ENCODE measurements at regions of chr11 and their contacts with region 1.

Region 1: GRCh38 chr11:124800226-124800929 is at the start of gene MSANTD2:
- DNase-seq: peak; percentile 53 to 71
- H3K4me3 ChIP-seq: peak within 1 kb of the TSS; percentile 97
- H3K27ac ChIP-seq: peak within 1 kb of the TSS; percentile 56
- H3K4me1 ChIP-seq: peaks cover 29% of the 10 kb centered on the region
- H3K27me3 ChIP-seq: no peaks in the 10 kb centered on the region
- CTCF ChIP-seq: no peak
- total RNA-seq, gene MSANTD2: 16.9 and 18.1 TPM in 2 replicates

Region 2: DNA sequence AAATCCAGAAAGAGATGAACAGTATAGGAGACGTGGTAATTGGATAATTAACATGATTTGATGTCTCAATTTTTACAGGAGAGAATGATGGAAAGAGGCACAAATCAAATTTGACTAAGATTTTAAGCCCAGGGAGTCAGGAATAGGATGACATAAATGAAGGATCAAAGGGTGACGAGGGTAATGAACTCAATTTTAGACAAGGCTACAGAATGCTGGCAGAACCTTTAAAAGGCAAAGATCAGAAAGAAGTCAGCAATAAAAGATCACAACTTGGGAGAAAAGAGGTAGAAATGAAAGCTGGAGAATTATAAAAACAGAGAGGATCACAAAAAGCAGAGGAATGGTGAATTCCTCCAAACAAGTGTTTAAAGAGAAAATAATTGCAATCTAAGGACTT is 243.6 kb before region 1 on chr11:
- CTCF ChIA-PET with region 1: no interaction called
- POLR2A ChIA-PET with region 1: no interaction called
- intact Hi-C with region 1: no loop called
- DNase-seq: no peak
- H3K4me3 ChIP-seq: no peak overlapping the region
- H3K27ac ChIP-seq: no peak overlapping the region
- H3K4me1 ChIP-seq: no peaks in the 10 kb centered on the region
- H3K27me3 ChIP-seq: peaks cover 15% of the 10 kb centered on the region; the same call in 1 of the 2 replicates
- CTCF ChIP-seq: no peak

Region 3: GRCh38 chr11:124739479-124740276 is 60.7 kb before region 1 on chr11 and contains the start of gene NRGN:
- CTCF ChIA-PET with region 1: no interaction called
- POLR2A ChIA-PET with region 1: no interaction called
- intact Hi-C with region 1: loop called (anchors 10 kb)
- DNase-seq: peak; percentile 76 to 89
- H3K4me3 ChIP-seq: peak within 1 kb of the TSS; percentile 73
- H3K27ac ChIP-seq: no peak within 1 kb of the TSS
- H3K4me1 ChIP-seq: peaks cover 3% of the 10 kb centered on the region; the same call in 1 of the 2 replicates
- H3K27me3 ChIP-seq: no peaks in the 10 kb centered on the region; the same call in 1 of the 2 replicates
- CTCF ChIP-seq: no peak
- total RNA-seq, gene NRGN: 6.8 and 10.2 TPM in 2 replicates

Region 4: GRCh38 chr11:124778281-124778680 is 22.1 kb before region 1 on chr11:
- CTCF ChIA-PET with region 1: no interaction called
- POLR2A ChIA-PET with region 1: interaction called, 14 read pairs
- intact Hi-C with region 1: no loop called
- DNase-seq: no peak
- H3K4me3 ChIP-seq: no peak overlapping the region
- H3K27ac ChIP-seq: no peak overlapping the region
- H3K4me1 ChIP-seq: no peaks in the 10 kb centered on the region
- H3K27me3 ChIP-seq: no peaks in the 10 kb centered on the region
- CTCF ChIP-seq: peak; percentile 48; the same call in 1 of the 2 replicates

Region 5: GRCh38 chr11:124882339-124883071 is 82.1 kb after region 1 on chr11:
- CTCF ChIA-PET with region 1: no interaction called
- POLR2A ChIA-PET with region 1: no interaction called
- intact Hi-C with region 1: no loop called
- DNase-seq: no peak
- H3K4me3 ChIP-seq: no peak overlapping the region
- H3K27ac ChIP-seq: no peak overlapping the region
- H3K4me1 ChIP-seq: no peaks in the 10 kb centered on the region
- H3K27me3 ChIP-seq: peaks cover 53% of the 10 kb centered on the region
- CTCF ChIP-seq: no peak